ENCODE measurements at regions of chr14 and their contacts with region 1.

Region 1: GRCh38 chr14:38749936-38750335 is 353.1 kb downstream of the SEC23A start:
- H3K4me3 Mint-ChIP-seq: no peak overlapping the region
- H3K27ac Mint-ChIP-seq: no peak overlapping the region
- H3K4me1 Mint-ChIP-seq: peaks cover 4% of the 10 kb centered on the region
- H3K27me3 Mint-ChIP-seq: no peaks in the 10 kb centered on the region

Region 2: DNA sequence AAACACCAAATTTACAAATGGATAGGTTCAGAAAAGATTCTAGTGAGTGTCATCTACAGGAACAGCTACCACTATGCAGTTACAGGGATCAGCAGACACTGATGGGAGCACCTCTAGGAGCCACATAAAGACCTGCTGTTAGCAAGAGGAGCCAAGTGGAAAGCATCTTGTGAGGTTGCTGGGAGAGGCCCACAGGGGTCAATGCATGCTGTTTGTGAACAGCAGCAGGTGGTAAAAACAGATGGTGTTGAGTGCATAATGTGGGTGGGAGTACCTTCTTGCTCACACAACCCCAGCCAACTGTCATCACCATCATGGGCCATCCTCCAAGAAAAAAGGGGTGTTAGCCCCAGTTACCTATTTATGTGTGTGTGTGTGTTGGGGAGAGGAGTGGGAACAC is 757.4 kb before region 1 on chr14:
- intact Hi-C with region 1: no loop called
- H3K4me3 Mint-ChIP-seq: no peak overlapping the region
- H3K27ac Mint-ChIP-seq: no peak overlapping the region
- H3K4me1 Mint-ChIP-seq: no peaks in the 10 kb centered on the region
- H3K27me3 Mint-ChIP-seq: peaks cover 1% of the 10 kb centered on the region

Region 3: GRCh38 chr14:38818555-38818954 is 68.6 kb after region 1 on chr14:
- intact Hi-C with region 1: loop called (anchors 5 kb)
- H3K4me3 Mint-ChIP-seq: no peak overlapping the region
- H3K27ac Mint-ChIP-seq: no peak overlapping the region
- H3K4me1 Mint-ChIP-seq: no peaks in the 10 kb centered on the region
- H3K27me3 Mint-ChIP-seq: no peaks in the 10 kb centered on the region

Measured in dendritic cell treated with granulocyte-macrophage colony-stimulating factor and Interleukin-4, amounts not matched to agents 40 ng/mL and 50 ng/mL, for 4 days (primary cell).